Posterior vena cava (tissue), 2 donors: ENCODE measurements at regions of chr4 and their contacts with region 1.

Region 1: DNA sequence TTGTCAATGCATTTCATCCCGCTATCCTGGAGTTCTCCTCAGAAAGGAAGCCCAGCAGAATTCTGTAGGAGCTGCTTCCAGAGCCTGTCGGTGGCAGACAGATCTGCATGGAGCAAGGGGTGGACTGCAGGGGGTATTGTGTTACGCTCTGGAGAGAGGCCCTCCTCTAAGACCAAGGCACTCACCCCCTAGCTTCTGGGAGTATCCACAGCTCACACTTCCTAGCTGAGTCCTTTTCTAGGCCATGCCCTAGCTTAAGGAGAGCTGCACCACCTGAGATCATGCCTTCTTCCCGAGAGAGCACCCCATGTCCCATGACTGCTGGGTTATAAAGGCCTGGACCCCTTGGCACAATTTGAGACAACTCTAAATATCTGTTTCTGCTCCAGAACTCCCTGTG is 39.1 kb downstream of the MTNR1A start:
- DNase-seq: no peak

Region 2: GRCh38 chr4:186554914-186555827 is 38.9 kb after region 1 on chr4 and contains the start of gene MTNR1A:
- intact Hi-C with region 1: loop called in 1 of 2 experiments (anchors 5 kb)
- DNase-seq: no peak
- total RNA-seq, gene MTNR1A: not detected